Activated CD4-positive, alpha-beta T cell treated with anti-CD3 and anti-CD28 coated beads for 36 hours (primary cell): ENCODE measurements at regions of chr17 and their contacts with region 1.

Region 1: DNA sequence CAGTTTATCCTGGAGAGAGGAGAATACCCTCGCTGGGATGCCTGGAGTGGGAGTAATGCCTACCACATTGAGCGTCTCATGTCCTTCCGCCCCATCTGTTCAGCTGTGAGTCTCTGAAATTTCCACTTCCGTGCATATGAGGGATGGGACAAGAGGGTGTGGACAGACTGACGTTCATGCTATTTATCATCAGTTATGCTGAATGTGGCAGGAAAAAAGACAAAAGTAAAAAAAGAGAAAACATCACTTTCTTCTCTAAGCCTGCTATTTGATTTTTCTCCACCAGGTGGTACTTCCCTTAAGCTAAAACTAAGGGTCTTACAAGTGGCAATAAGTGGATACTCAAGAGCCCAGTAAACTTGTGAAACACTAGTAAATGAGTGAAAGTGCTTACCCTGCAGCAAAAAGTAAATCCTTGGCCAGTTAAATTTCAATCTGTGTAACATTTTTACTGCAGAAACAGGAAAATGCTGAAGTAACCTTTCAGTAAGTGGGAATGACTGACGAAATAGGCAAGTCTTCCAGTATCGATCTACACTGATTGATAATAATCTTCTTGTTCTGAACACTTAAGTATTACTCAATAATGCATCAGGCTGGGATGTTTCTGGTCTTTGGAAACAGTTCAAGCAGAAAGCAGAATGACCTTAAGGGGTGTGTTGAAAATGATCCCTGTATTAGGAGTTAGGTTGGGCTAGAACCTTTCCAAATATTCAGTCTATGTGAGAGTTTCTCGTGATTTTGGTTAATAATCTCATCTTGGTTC is 5.6 kb downstream of the CRYBA1 start:
- DNase-seq: no peak
- ATAC-seq: no peak
- H3K4me3 Mint-ChIP-seq: no peak overlapping the region
- H3K27ac Mint-ChIP-seq: no peak overlapping the region
- H3K4me1 Mint-ChIP-seq: peaks cover 12% of the 10 kb centered on the region
- H3K27me3 Mint-ChIP-seq: no peaks in the 10 kb centered on the region

Region 2: GRCh38 chr17:29241015-29241963 is 11.0 kb before region 1 on chr17:
- CTCF ChIA-PET with region 1: interaction called, 11 read pairs
- POLR2A ChIA-PET with region 1: no interaction called
- intact Hi-C with region 1: no loop called
- DNase-seq: peak; percentile 63
- ATAC-seq: peak; percentile 99
- H3K4me3 Mint-ChIP-seq: no peak overlapping the region
- H3K27ac Mint-ChIP-seq: peak overlapping the region; percentile 47
- H3K4me1 Mint-ChIP-seq: peaks cover 14% of the 10 kb centered on the region
- H3K27me3 Mint-ChIP-seq: no peaks in the 10 kb centered on the region